ENCODE measurements at regions of chr6 and their contacts with region 1.

Region 1: DNA sequence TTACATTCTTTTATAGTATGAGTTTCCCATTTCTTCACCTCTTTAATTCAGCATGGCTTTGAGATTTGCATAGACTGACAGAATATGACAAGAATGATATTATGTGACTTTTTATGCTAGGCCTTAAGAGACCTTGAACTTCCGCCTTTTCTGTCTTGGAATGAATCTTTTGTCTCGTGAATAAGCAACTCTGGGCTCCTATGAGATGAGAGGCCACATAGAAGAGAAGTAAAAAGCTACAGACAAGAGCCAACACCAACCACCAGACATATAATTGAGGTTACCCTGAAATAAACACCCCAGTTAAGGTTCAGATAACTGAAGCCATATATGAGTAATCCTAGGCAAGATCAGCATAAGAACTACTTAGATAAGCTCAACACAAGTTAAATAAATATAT is 600.8 kb downstream of the MEI4 start:
- DNase-seq: no peak
- ATAC-seq: no peak
- H3K4me3 ChIP-seq: no peak overlapping the region
- H3K27ac ChIP-seq: no peak overlapping the region
- H3K4me1 ChIP-seq: no peaks in the 10 kb centered on the region
- H3K27me3 ChIP-seq: no peaks in the 10 kb centered on the region
- CTCF ChIP-seq: no peak
- POLR2A ChIP-seq: no peak
- RAD21 ChIP-seq: no peak

Region 2: DNA sequence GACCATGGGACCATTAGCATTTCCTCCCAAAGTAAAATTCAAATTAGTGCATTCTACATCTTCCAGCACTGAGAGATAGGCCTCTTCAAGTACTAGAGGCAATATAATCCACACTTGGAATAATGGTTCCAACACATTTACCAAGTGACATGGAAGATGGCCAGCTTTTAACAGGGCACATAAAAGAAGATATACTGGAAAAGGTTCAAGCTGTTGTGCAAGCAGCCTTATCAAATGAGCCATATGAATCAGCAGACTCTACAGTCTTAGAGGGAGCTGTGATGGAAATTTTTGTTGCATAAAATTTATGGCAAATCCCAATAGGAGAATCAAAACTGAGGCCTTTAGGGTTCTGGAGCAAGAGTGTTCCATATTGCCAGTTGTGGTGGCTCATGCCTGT is 87.1 kb after region 1 on chr6:
- CTCF ChIA-PET with region 1: no interaction called
- POLR2A ChIA-PET with region 1: no interaction called
- dilution Hi-C with region 1: no loop called
- in situ Hi-C with region 1: loop called (anchors 5 kb)
- intact Hi-C with region 1: no loop called
- DNase-seq: no peak
- ATAC-seq: no peak
- H3K4me3 ChIP-seq: no peak overlapping the region
- H3K27ac ChIP-seq: no peak overlapping the region
- H3K4me1 ChIP-seq: no peaks in the 10 kb centered on the region
- H3K27me3 ChIP-seq: no peaks in the 10 kb centered on the region
- CTCF ChIP-seq: no peak
- POLR2A ChIP-seq: no peak
- RAD21 ChIP-seq: no peak

Region 3: GRCh38 chr6:78460711-78461110 is 207.1 kb after region 1 on chr6:
- CTCF ChIA-PET with region 1: no interaction called
- POLR2A ChIA-PET with region 1: no interaction called
- dilution Hi-C with region 1: no loop called
- in situ Hi-C with region 1: no loop called
- intact Hi-C with region 1: no loop called
- DNase-seq: no peak
- ATAC-seq: no peak
- H3K4me3 ChIP-seq: no peak overlapping the region
- H3K27ac ChIP-seq: no peak overlapping the region
- H3K4me1 ChIP-seq: no peaks in the 10 kb centered on the region; the same call in 1 of the 2 replicates
- H3K27me3 ChIP-seq: no peaks in the 10 kb centered on the region
- CTCF ChIP-seq: no peak
- POLR2A ChIP-seq: no peak
- RAD21 ChIP-seq: no peak